Activated naive CD4-positive, alpha-beta T cell treated with anti-CD3 and anti-CD28 coated beads, Interleukin-2, amount 10 ng/mL, durations not matched to agents 7 days and 5 days (primary cell): ENCODE measurements at regions of chr10 and their contacts with region 1.

Region 1: DNA sequence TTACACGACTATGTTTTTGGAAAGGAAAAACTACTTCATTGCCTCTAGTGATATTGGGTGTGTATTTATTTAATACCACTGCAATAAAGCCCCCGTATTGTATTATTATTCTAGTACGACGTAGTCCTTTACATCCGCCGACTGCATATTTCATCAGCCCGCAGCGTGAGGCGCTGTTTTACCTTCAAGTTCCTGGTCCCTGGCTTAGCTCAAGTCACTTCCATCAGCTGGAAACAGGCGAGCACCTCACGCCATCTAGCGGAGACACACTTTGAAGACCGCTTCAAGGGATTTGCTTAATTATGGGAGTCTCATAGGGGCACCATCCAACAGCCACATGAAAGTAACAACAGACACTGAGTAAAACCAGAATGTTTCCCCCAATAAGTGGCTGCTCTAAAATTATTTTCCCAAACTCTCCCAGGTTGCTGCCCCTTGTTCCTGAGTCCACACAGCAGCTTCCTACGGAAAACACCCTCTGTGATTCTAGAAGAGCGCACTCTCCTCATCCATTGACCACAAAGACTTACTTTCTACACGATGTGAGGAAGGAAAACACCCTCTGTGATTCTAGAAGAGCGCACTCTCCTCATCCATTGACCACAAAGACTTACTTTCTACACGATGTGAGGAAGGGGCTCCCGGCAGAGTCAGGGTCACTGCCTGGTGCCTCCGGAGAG is 15.7 kb upstream of the ITIH2 start:
- DNase-seq: peak; percentile 87
- H3K4me3 Mint-ChIP-seq: no peak overlapping the region
- H3K27ac Mint-ChIP-seq: no peak overlapping the region
- H3K4me1 Mint-ChIP-seq: peaks cover 6% of the 10 kb centered on the region
- H3K27me3 Mint-ChIP-seq: peaks cover 11% of the 10 kb centered on the region

Region 2: GRCh38 chr10:7525314-7526016 is 161.9 kb before region 1 on chr10:
- CTCF ChIA-PET with region 1: interaction called, 74 read pairs
- DNase-seq: peak; percentile 79
- H3K4me3 Mint-ChIP-seq: no peak overlapping the region
- H3K27ac Mint-ChIP-seq: no peak overlapping the region
- H3K4me1 Mint-ChIP-seq: peaks cover 29% of the 10 kb centered on the region
- H3K27me3 Mint-ChIP-seq: peaks cover 22% of the 10 kb centered on the region

Region 3: DNA sequence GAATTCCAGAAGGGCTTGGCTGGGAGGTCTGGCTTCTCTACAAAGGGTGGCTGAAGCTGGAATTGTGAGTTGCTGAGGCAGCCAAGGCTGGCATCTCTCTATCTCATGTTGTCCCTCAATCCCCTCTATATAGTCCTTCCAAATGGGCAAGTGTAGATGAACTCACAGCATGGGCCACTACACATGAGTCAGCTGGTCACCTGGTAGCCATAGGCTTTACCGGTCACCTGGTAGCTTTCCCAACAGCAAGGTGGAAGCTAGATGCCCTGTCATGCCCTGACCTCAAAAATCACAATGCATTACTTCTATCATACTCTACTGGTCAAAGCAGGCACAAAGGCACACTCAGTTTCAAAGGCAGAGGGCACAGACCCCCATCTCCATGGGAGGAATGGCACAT is 40.8 kb before region 1 on chr10:
- CTCF ChIA-PET with region 1: interaction called, 10 read pairs
- DNase-seq: no peak
- H3K4me3 Mint-ChIP-seq: no peak overlapping the region
- H3K27ac Mint-ChIP-seq: no peak overlapping the region
- H3K4me1 Mint-ChIP-seq: no peaks in the 10 kb centered on the region
- H3K27me3 Mint-ChIP-seq: peaks cover 18% of the 10 kb centered on the region

Region 4: DNA sequence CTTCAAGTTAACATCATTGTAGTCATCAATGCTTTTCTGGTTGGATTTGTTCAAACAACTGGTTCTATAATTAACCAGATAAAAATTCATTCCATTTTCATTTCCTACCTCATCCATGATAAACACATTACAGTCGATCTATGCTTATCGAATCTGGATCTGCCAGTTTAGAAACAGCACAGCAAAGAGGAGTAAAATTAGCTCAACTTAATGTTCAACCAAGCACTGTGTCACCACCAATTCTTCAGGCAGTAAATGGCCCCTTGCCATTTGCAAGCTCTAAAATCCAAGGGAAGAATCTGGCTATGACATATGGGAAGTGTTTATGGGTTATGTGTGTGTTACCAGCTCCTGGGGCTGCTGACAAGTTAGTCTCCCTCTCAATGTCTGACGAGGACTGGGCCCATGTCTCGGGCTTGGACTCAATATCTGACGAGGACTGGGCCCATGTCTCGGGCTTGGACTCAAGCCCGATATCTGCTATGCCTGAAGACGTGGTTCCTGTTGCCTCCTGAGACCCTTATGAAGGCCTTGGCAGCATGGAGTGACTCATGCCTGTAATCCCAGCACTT is 10.0 kb after region 1 on chr10:
- CTCF ChIA-PET with region 1: interaction called, 15 read pairs
- DNase-seq: no peak
- H3K4me3 Mint-ChIP-seq: no peak overlapping the region
- H3K27ac Mint-ChIP-seq: no peak overlapping the region
- H3K4me1 Mint-ChIP-seq: no peaks in the 10 kb centered on the region
- H3K27me3 Mint-ChIP-seq: peaks cover 18% of the 10 kb centered on the region